ENCODE measurements at regions of chr7 and their contacts with region 1.

Region 1: GRCh38 chr7:140646931-140647647 is 6.5 kb upstream of the DENND2A start:
- H3K4me3 ChIP-seq: no peak overlapping the region
- H3K27ac ChIP-seq: no peak overlapping the region
- H3K4me1 ChIP-seq: no peaks in the 10 kb centered on the region
- CTCF ChIP-seq: peak; percentile 85

Region 2: GRCh38 chr7:140435252-140435895 is 211.7 kb before region 1 on chr7:
- CTCF ChIA-PET with region 1: no interaction called
- POLR2A ChIA-PET with region 1: no interaction called
- H3K4me3 ChIP-seq: no peak overlapping the region
- H3K27ac ChIP-seq: no peak overlapping the region
- H3K4me1 ChIP-seq: no peaks in the 10 kb centered on the region
- CTCF ChIP-seq: no peak

Region 3: DNA sequence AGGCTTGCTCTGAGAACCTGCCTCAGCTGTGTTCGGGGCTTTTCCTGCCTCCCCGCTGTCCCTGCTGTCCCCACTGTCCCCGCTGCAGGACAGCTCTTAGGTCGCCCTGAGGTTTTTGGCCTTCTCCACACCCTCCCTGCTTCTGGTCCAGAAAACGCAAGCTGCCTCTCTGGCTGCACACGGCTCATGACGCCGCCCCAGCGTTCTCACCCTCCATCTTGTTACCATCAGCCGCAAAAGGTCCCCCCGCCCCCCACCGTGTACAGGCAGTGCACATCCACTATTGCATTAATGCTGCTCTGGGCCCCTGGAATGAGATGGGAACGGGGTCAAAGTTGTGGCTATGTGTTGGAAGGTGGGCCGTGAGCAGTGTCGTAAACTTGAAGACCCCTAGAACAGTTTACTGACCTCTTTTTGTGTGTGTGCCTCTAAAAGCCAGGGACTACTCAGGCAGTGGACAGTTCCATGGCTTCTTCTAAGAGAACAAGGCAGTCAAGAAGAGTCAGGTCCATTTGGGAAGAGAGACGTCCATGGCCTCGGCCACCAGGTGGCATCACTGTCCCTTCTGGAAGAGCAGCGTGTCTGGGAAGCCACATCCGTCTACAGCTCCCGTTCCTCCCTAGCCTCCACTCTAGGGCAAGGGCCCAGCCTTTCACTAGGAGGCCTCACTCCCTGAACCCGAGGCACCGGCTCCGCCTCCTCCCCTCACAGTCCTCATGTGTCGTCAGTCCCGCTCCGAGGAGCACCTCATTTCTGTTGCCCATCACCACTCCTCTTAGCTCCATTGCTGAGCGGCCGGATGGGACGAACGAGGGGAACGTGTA is 129.3 kb before region 1 on chr7:
- CTCF ChIA-PET with region 1: interaction called, 80 read pairs
- POLR2A ChIA-PET with region 1: interaction called, 3 read pairs
- H3K4me3 ChIP-seq: no peak overlapping the region
- H3K27ac ChIP-seq: no peak overlapping the region
- H3K4me1 ChIP-seq: no peaks in the 10 kb centered on the region
- CTCF ChIP-seq: peak; percentile 96

Region 4: DNA sequence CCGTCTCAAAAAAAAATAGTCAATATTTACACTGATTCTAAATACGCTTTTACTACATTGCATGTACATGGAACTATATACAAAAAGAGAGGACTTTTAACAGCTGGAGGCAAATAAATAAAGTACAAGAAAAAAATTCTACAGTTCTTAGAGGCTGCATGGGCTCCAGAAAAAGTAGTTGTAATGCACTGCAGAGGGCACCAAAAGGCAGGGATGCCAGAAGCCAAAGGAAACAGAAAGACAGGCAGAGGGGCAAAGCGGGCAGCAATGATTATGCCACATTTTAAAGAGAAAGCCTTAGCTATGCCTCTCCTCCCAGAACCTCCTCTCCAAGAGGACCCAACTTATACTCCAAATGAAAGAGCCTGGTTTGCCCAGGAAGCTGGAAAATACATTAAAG is 14.0 kb after region 1 on chr7:
- CTCF ChIA-PET with region 1: interaction called, 10 read pairs
- POLR2A ChIA-PET with region 1: interaction called, 3 read pairs
- H3K4me3 ChIP-seq: no peak overlapping the region
- H3K27ac ChIP-seq: no peak overlapping the region
- H3K4me1 ChIP-seq: no peaks in the 10 kb centered on the region
- CTCF ChIP-seq: 0 out of 2 replicates have a peak, but pooled peaks have one; percentile 30